ENCODE measurements at regions of chr20 and their contacts with region 1.

Region 1: DNA sequence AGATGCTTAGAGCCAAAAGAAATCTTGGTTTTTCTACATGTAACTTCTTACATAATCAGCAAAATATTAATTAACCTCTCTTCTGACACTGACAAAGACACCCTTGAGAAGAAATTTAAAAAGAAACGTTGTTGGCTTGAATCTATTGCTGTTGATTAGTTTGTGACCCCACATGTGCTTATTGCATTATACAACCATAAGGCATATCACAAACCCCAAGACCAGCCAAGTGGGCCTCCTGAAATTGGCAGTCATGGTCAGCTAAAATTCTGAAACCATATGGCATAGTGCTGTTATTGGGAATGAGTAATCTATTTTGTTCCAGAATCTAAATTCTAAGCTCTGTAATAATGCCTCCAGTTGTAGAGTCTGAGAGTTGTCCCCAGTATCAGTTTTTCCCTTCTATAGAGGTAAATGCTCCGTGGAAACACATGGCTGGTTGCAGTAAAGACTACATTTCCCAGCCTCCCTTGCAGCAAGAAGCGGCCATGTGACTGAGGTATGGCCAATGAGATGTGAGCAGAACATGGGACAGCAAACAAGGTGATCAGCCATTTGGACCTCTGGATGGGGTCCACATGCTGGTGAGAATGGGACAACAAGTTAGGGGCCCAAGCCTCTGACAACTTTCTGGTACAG is 42.3 kb upstream of the PTPN1 start:
- DNase-seq: no peak
- ATAC-seq: peak; percentile 80
- H3K4me3 ChIP-seq: no peak overlapping the region
- H3K27ac ChIP-seq: no peak overlapping the region
- H3K4me1 ChIP-seq: peaks cover 3% of the 10 kb centered on the region
- H3K27me3 ChIP-seq: no peaks in the 10 kb centered on the region
- CTCF ChIP-seq: no peak
- EP300 ChIP-seq: no peak
- POLR2A ChIP-seq: no peak
- RAD21 ChIP-seq: no peak

Region 2: DNA sequence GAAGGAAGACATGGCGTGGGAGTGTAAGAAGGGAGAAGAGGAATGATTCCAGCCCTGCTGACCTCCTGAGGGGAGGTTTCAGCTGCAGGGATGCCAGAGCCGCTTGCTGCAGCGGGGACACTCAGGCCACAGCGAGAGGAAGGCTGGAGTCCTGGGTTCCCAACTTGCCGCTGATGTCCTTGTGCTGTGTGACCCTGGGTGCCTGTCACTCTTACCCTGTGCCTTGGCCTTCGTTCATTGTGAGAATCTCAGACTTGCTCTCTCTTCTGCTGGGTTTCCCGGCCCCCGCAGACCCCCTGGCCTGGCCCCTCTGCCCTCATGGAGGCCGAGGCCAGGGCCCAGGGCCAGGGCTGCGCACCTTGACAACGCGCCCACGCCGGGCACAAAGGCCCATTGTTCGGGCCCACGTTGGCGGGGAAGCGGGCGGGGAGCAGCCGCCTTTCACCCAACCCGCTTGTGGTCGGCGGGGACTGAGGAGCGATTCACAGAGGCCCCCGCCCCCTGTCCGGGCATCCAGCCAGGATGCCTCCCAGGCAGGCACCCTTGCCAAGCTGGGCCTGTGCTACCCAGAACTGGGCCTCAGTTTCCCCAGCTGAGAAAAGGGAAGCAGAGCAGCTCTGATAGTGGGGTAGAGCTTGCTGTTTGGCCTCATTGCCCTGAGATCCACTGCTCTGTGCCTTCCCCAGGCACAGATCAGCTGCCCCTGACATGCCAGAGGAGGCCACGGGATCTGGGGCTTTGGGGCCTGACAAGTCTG is 224.8 kb before region 1 on chr20:
- CTCF ChIA-PET with region 1: no interaction called
- POLR2A ChIA-PET with region 1: no interaction called
- RAD21 ChIA-PET with region 1: no interaction called
- SMC1A ChIA-PET with region 1: no interaction called
- in situ Hi-C with region 1: no loop called
- intact Hi-C with region 1: no loop called
- DNase-seq: no peak
- ATAC-seq: no peak
- H3K4me3 ChIP-seq: no peak overlapping the region
- H3K27ac ChIP-seq: no peak overlapping the region
- H3K4me1 ChIP-seq: no peaks in the 10 kb centered on the region
- H3K27me3 ChIP-seq: no peaks in the 10 kb centered on the region; a peak in 1 of 4 replicates
- CTCF ChIP-seq: no peak
- EP300 ChIP-seq: no peak
- POLR2A ChIP-seq: no peak
- RAD21 ChIP-seq: no peak

Region 3: GRCh38 chr20:50588034-50588611 is 120.3 kb after region 1 on chr20:
- CTCF ChIA-PET with region 1: interaction called, 14 read pairs
- POLR2A ChIA-PET with region 1: no interaction called
- RAD21 ChIA-PET with region 1: no interaction called
- SMC1A ChIA-PET with region 1: interaction called, 3 read pairs
- in situ Hi-C with region 1: no loop called
- intact Hi-C with region 1: loop called (anchors 5 kb)
- DNase-seq: no peak
- ATAC-seq: peak; percentile 84
- H3K4me3 ChIP-seq: no peak overlapping the region
- H3K27ac ChIP-seq: no peak overlapping the region
- H3K4me1 ChIP-seq: no peaks in the 10 kb centered on the region
- H3K27me3 ChIP-seq: no peaks in the 10 kb centered on the region
- CTCF ChIP-seq: peak; percentile 86 to 97 (median 93)
- EP300 ChIP-seq: no peak
- POLR2A ChIP-seq: no peak; the same call in none of the 2 replicates
- RAD21 ChIP-seq: peak; percentile 55

Measured in GM12878 (cell line).